Natural killer cell (primary cell): ENCODE measurements at regions of chr15 and their contacts with region 1.

Region 1: GRCh38 chr15:85582131-85583079 is 202.0 kb downstream of the AKAP13 start:
- DNase-seq: peak; percentile 66 to 83
- ATAC-seq: peak; percentile 55 to 77 (median 68)
- H3K4me3 ChIP-seq: peak overlapping the region; percentile 47
- H3K4me3 Mint-ChIP-seq: peak overlapping the region; percentile 95
- H3K27ac ChIP-seq: peak overlapping the region; percentile 96
- H3K27ac Mint-ChIP-seq: peak overlapping the region; percentile 95 to 98
- H3K4me1 ChIP-seq: peaks cover 43% of the 10 kb centered on the region
- H3K4me1 Mint-ChIP-seq: peaks cover 64 to 66% of the 10 kb centered on the region in 2 donors
- H3K27me3 ChIP-seq: no peaks in the 10 kb centered on the region
- H3K27me3 Mint-ChIP-seq: no peaks in the 10 kb centered on the region
- CTCF ChIP-seq: no peak

Region 2: GRCh38 chr15:85380217-85380811 is 202.1 kb before region 1 on chr15 and contains the start of gene AKAP13:
- intact Hi-C with region 1: loop called (anchors 5 kb)
- DNase-seq: peak; percentile 90 to 98
- ATAC-seq: peak; percentile 79 to 88 (median 80)
- H3K4me3 ChIP-seq: peak within 1 kb of the TSS; percentile 66
- H3K4me3 Mint-ChIP-seq: peak within 1 kb of the TSS; percentile 92
- H3K27ac ChIP-seq: peak within 1 kb of the TSS; percentile 78
- H3K27ac Mint-ChIP-seq: peak within 1 kb of the TSS; percentile 90 to 95
- H3K4me1 ChIP-seq: peaks cover 16% of the 10 kb centered on the region
- H3K4me1 Mint-ChIP-seq: peaks cover 37 to 38% of the 10 kb centered on the region in 2 donors
- H3K27me3 ChIP-seq: no peaks in the 10 kb centered on the region
- H3K27me3 Mint-ChIP-seq: peaks cover 16 to 17% of the 10 kb centered on the region in 2 donors
- CTCF ChIP-seq: no peak
- total RNA-seq, gene AKAP13: 573 to 661 (median 647) TPM

Region 3: DNA sequence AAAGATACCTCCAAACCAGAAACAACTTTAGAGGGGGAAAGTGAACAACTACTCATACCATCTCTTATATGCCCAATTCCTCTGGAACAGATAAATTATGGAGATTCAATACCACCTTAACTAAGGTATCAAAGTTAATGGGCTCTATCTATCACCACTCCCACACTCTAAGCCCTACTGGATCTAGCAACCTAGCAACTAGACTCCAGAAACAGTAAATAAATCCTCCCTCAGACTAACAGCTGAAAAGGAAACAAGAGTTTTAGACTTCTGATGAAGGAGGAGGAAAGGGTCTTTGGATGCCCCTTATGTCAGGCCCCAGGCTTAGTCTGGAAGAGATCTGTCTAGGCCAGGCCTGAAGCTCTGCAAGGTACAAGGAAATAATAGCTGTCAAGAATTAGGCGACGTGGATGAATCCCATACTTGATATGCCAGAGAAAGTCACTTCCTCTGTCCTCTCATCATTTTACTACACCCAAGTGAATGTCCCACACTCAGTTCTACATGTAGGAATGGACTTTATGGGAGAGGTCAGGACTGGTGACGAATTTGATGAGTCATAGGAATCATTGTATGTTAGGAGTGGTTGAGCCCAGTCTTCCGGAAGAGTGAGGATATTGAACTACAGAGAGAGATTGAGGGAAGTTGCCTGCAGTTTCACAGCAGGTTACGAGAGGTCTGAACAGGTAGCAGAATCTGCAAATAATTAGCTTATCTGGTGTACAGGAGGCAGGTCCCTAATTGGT is 88.2 kb before region 1 on chr15:
- intact Hi-C with region 1: loop called (anchors 5 kb)
- DNase-seq: peak in 1 of 2 donors; percentile 26
- ATAC-seq: peak in 2 of 3 donors; percentile 67 to 82
- H3K4me3 ChIP-seq: no peak overlapping the region
- H3K4me3 Mint-ChIP-seq: no peak overlapping the region
- H3K27ac ChIP-seq: no peak overlapping the region
- H3K27ac Mint-ChIP-seq: peak overlapping the region in 1 of 2 donors; percentile 75
- H3K4me1 ChIP-seq: peaks cover 6% of the 10 kb centered on the region
- H3K4me1 Mint-ChIP-seq: peaks cover 33 to 47% of the 10 kb centered on the region in 2 donors
- H3K27me3 ChIP-seq: no peaks in the 10 kb centered on the region
- H3K27me3 Mint-ChIP-seq: no peaks in the 10 kb centered on the region
- CTCF ChIP-seq: no peak

Region 4: GRCh38 chr15:85543741-85544155 is 38.7 kb before region 1 on chr15:
- intact Hi-C with region 1: loop called (anchors 5 kb)
- DNase-seq: peak; percentile 47 to 73
- ATAC-seq: peak; percentile 80 to 88 (median 86)
- H3K4me3 ChIP-seq: peak overlapping the region; percentile 14
- H3K4me3 Mint-ChIP-seq: peak overlapping the region; percentile 84
- H3K27ac ChIP-seq: peak overlapping the region; percentile 53
- H3K27ac Mint-ChIP-seq: peak overlapping the region; percentile 83 to 91
- H3K4me1 ChIP-seq: peaks cover 10% of the 10 kb centered on the region
- H3K4me1 Mint-ChIP-seq: peaks cover 53 to 54% of the 10 kb centered on the region in 2 donors
- H3K27me3 ChIP-seq: no peaks in the 10 kb centered on the region
- H3K27me3 Mint-ChIP-seq: no peaks in the 10 kb centered on the region
- CTCF ChIP-seq: peak; percentile 8

Region 5: DNA sequence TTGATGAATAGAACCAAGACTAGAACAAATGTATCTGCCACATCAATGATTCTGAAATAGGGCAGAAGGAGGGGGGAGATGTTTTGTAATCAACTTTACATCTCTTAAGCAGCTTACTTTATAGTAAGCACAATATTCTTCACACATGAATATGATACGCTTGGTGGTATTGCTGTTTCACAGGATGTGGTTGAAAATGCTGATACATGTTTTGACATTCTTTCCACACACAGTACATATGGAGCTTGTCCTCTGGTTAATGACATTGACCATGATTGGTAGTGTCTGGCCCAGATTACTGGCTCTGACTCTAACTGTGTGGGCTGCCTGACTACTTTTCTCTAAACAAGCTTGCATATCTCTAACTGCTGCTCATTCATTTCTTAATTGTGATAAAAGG is 43.5 kb after region 1 on chr15:
- intact Hi-C with region 1: loop called (anchors 2 kb)
- DNase-seq: peak in 1 of 2 donors; percentile 73
- ATAC-seq: peak; percentile 81 to 95 (median 89)
- H3K4me3 ChIP-seq: no peak overlapping the region
- H3K4me3 Mint-ChIP-seq: peak overlapping the region; percentile 71
- H3K27ac ChIP-seq: peak overlapping the region; percentile 83
- H3K27ac Mint-ChIP-seq: peak overlapping the region; percentile 88 to 94
- H3K4me1 ChIP-seq: peaks cover 16% of the 10 kb centered on the region
- H3K4me1 Mint-ChIP-seq: peaks cover 74 to 78% of the 10 kb centered on the region in 2 donors
- H3K27me3 ChIP-seq: no peaks in the 10 kb centered on the region
- H3K27me3 Mint-ChIP-seq: no peaks in the 10 kb centered on the region
- CTCF ChIP-seq: no peak

Region 6: DNA sequence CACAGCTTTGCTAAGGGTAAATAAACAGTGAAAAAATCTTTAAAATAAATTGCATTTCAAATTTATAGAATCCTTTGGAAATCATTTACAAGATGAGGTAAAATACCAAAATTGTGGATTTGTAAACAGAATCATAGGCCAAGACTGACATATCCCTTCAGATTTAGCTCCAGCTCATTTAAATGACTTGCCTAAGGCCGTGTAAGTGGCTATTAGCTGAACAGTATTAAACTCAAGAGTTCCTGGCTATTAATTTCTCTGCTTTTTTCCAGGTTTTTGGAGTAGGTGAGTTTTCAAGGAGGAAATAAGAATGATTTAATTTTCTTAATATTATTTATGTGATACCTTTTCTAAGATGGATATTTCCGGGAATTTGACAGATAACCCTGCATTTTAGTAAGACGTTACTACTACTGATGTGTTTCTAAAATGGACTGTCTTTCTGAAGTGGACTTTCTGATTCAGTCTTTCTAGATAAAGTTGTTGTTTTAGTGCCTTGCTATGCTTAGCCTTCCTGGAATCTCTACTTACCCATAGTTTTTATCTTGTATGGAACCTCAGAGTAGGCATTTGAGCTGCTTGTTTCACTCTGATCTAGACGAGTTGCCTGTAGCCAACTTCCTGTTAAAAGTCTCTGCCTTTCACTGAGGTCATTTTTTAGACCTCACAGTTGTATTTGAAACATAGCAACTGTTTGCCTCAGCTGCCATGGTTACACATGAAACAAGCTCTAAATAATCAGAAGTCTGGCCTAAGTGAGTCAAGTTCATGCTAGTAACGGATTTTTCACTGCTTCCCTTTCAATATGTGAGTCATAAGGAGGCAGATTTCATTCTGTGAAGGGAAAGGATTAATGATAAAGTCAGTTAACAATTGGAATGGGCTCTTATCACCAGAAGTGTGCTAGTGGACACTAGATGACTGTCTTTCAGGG is 85.4 kb after region 1 on chr15:
- intact Hi-C with region 1: loop called (anchors 1 kb)
- DNase-seq: peak; percentile 42 to 94
- ATAC-seq: peak; percentile 86 to 92 (median 92)
- H3K4me3 ChIP-seq: no peak overlapping the region
- H3K4me3 Mint-ChIP-seq: peak overlapping the region; percentile 75
- H3K27ac ChIP-seq: peak overlapping the region; percentile 100
- H3K27ac Mint-ChIP-seq: peak overlapping the region; percentile 99
- H3K4me1 ChIP-seq: peaks cover 9% of the 10 kb centered on the region
- H3K4me1 Mint-ChIP-seq: peaks cover 21 to 22% of the 10 kb centered on the region in 2 donors
- H3K27me3 ChIP-seq: no peaks in the 10 kb centered on the region
- H3K27me3 Mint-ChIP-seq: no peaks in the 10 kb centered on the region
- CTCF ChIP-seq: no peak

Region 7: GRCh38 chr15:85689729-85690128 is 107.3 kb after region 1 on chr15:
- intact Hi-C with region 1: loop called (anchors 2 kb)
- DNase-seq: peak; percentile 72 to 86
- ATAC-seq: peak; percentile 51 to 75 (median 68)
- H3K4me3 ChIP-seq: peak overlapping the region; percentile 70
- H3K4me3 Mint-ChIP-seq: peak overlapping the region; percentile 99
- H3K27ac ChIP-seq: peak overlapping the region; percentile 94
- H3K27ac Mint-ChIP-seq: peak overlapping the region; percentile 99 to 100
- H3K4me1 ChIP-seq: peaks cover 32% of the 10 kb centered on the region
- H3K4me1 Mint-ChIP-seq: peaks cover 62 to 65% of the 10 kb centered on the region in 2 donors
- H3K27me3 ChIP-seq: no peaks in the 10 kb centered on the region
- H3K27me3 Mint-ChIP-seq: no peaks in the 10 kb centered on the region
- CTCF ChIP-seq: no peak